Thyroid gland (tissue), 4 donors: ENCODE measurements at regions of chr5 and their contacts with region 1.

Region 1: DNA sequence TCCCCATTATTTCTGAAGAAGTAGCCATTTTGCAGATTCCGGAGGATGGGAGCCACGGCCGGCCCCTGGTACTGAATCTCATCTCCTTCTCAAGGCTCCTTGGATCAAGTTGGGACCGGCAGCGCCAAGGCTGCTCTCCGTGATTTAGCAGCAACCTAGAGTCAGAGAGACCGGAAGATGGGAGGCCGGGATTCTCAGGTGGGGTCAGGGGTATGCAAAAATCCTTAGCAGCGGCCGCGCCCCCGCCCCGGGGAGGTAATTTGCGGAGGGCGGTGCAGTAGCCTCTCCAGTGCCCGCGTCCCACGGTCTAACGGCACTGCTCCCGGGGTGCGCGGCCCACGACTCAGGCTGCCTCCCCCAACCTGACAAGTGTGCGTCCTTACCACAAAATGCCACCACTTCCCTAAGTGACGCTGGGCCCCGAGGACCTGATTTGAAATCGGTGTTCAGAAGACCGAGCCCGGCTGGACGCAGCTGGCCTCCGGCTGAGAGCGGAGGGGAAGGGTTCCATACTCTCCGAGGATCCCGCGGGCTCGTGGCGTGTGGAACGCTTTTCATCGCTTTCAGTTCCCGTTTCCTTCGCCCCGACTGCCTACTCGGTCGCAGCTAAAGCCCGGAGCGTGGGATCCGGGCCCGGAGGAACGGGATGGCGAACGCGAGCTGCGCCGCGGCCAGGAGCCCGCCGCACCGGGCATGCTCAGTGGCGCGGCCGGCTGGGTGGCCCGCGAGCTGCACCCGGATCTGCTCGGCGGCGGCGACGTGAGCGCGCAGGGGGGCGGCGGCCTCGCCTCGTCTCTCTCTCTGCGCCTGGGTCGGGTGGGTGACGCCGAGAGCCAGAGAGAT is at the start of gene SCAMP1:
- DNase-seq: peak; percentile 90 to 92
- H3K4me3 ChIP-seq: peak within 1 kb of the TSS; percentile 86 to 96 (median 94)
- H3K27ac ChIP-seq: peak within 1 kb of the TSS; percentile 74 to 93 (median 91)
- H3K4me1 ChIP-seq: peaks cover 9 to 22% of the 10 kb centered on the region in 2 donors
- H3K27me3 ChIP-seq: no peaks in the 10 kb centered on the region
- CTCF ChIP-seq: peak in 4 of 6 experiments; percentile 28 to 68 (median 60)
- POLR2A ChIP-seq: peak; percentile 34 to 91
- total RNA-seq, gene SCAMP1: 45.0 to 56.1 (median 49.9) TPM

Region 2: DNA sequence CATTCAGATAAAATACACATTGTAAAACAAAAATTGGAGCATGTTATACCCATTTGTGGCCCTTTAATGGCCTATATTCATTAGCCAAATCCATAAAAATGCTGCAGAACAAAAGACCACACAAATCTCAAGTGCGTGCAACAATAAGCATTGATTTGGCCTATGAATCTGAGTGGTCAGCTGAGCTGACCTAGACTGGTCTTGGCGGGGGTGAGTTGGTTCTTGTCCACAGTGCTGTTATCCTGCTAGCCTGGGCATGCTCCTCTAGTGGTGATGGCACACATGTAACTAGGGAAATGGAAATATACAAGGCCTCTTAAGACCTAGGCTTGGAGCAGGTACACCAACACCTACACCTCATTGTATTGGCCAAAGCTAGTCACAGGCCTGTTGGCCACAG is 461.7 kb before region 1 on chr5:
- intact Hi-C with region 1: no loop called
- DNase-seq: no peak
- H3K4me3 ChIP-seq: no peak overlapping the region
- H3K27ac ChIP-seq: no peak overlapping the region
- H3K4me1 ChIP-seq: no peaks in the 10 kb centered on the region
- H3K27me3 ChIP-seq: no peaks in the 10 kb centered on the region
- CTCF ChIP-seq: no peak
- POLR2A ChIP-seq: no peak

Region 3: GRCh38 chr5:78294248-78295034 is 65.6 kb before region 1 on chr5 and contains the start of gene AP3B1:
- intact Hi-C with region 1: loop called (anchors 2 kb)
- DNase-seq: peak; percentile 100
- H3K4me3 ChIP-seq: peak within 1 kb of the TSS; percentile 82 to 100 (median 95)
- H3K27ac ChIP-seq: peak within 1 kb of the TSS; percentile 56 to 87 (median 79)
- H3K4me1 ChIP-seq: peaks cover 10 to 15% of the 10 kb centered on the region in 2 donors
- H3K27me3 ChIP-seq: no peaks in the 10 kb centered on the region
- CTCF ChIP-seq: no peak
- POLR2A ChIP-seq: peak; percentile 80 to 90
- total RNA-seq, gene AP3B1: 60.9 to 86.6 (median 72.2) TPM

Region 4: DNA sequence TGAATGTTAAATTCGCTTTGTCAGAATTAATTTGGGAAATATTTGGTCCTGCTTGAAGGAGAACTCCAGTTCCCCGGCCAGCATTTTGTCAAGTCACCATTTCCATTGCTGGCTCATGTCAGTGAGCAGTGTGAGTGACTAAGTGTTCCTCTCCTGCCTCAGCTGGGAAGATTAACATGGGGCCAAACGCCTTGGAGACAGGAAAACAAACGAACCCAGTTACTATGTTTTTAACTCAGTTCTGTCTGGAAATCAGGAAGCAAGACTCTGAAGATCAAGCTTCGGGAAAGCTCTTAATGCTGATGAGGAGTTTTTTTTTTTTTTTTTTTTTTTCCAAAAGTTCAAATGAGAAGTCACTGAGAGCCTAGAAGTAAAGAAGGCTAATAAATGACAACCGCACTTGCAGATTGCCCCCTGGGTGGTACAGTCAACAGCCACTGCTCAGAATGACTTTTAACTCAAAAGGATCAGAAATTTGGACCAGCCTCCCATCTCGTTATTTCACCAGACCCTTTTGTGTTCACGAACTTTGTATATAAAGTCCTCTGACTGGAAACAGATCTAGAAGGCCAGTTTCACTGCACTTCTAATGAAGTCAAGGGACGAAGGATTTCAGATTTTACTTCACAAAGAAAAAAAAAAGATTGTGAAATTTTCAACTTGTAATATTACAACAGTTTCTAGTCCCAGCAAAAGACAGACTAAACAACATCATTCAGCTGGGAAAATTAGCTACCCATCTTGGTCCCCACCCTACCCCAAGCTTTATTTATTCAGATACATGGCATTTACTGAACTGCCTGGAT is 167.2 kb after region 1 on chr5:
- intact Hi-C with region 1: loop called (anchors 10 kb)
- DNase-seq: peak; percentile 60 to 72
- H3K4me3 ChIP-seq: no peak overlapping the region
- H3K27ac ChIP-seq: peak overlapping the region; percentile 47 to 61 (median 52)
- H3K4me1 ChIP-seq: peaks cover 10 to 19% of the 10 kb centered on the region in 2 donors
- H3K27me3 ChIP-seq: no peaks in the 10 kb centered on the region
- CTCF ChIP-seq: no peak
- POLR2A ChIP-seq: no peak